ENCODE measurements at regions of chr12 and their contacts with region 1.

Region 1: DNA sequence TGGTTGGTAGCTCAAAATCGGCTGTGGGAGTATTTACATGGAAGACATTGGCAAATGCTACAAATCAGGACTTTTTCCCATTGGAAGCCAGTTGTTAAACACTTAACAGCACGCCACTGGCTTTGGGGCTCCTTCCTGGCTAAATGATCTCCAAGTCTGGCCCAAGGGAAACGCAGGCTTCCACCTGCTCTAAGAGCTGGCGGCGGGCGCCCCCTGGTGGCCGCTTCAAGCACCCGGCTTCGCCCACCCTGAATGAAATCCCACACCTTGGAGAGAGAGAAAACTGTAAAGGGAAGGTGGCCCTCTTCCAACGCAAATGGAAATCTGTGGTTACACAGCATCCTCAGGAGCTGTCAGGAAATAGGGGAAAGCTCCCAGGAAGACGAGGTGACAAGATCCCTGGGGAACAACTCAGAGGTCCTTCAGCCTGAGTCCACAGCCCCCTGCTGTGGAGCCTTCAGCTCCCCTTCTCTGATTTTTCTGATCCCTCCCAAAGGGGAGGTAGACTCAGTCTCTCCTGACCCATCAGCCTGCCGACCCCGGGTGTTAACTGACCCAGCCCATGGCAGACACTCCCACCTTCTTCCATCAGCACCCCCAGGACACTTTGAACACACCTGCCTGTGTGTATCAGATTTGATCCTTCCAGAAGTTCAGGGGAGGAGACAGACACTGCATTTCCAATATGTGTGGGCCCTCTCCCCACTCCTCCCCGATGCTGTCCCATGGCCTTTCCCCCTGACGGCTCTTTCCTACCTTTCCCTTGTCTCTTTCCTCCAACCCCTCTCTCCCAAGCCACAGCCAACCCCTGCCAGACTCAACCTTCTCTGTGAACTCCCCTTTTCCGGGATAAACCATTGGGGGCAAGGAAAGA is 15.4 kb downstream of the SELPLG start:
- DNase-seq: peak; percentile 85
- H3K27ac ChIP-seq: no peak overlapping the region
- CTCF ChIP-seq: peak; percentile 95

Region 2: GRCh38 chr12:108562348-108563135 is 55.8 kb before region 1 on chr12 and contains the start of gene ISCU:
- CTCF ChIA-PET with region 1: interaction called, 30 read pairs
- POLR2A ChIA-PET with region 1: no interaction called
- DNase-seq: peak; percentile 98
- H3K27ac ChIP-seq: peak within 1 kb of the TSS; percentile 83
- CTCF ChIP-seq: no peak

Measured in RWPE1 (cell line).